ENCODE measurements at regions of chr4 and their contacts with region 1.

Region 1: DNA sequence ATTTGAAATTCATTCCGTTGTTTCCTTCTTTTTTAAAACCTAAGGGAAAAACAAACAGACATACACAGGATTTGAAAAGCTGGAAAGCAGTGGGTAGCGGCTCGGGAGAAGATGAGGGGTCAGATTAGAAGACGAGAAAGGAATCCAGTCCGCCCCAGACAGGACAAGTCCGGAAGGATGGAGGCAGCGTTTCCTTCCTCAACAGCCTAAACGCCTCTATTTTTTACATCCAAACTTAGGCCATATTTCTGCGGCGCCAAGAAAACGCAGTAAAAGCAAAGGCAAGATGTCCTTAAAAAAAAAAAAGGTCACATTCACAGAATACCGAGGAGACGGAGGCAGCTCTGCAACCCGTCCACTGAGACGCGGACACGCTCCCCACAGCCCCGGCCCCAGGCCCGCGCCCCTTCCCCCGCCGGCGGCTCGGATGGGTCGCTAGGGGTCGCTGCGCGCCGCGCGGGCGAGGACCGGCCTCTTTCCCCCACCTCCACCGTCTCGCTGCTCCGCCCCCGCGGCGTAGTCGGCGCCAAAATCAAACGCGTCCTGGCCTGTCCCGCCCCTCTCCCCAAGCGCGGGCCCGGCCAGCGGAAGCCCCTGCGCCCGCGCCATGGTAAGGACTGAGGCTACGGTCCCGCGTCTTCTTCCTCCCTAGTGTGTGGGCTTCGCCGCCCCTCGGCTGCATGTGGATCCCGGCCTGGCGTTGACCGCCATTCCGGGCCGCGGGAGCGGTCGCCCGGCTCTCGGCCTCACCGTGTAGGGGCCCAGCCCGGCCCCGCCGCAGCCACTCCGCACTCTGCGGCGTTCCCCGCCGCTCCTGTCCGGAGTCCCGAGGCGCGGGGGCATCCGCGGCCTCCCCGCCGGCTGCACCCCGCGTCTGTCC is at the start of gene MND1:
- DNase-seq: peak; percentile 77
- H3K4me3 ChIP-seq: peak within 1 kb of the TSS; percentile 54 to 82 (median 76)
- H3K27ac ChIP-seq: peak within 1 kb of the TSS; percentile 78
- H3K4me1 ChIP-seq: peaks cover 25% of the 10 kb centered on the region
- H3K27me3 ChIP-seq: no peaks in the 10 kb centered on the region
- CTCF ChIP-seq: peak; percentile 77 to 87
- POLR2A ChIP-seq: no peak
- total RNA-seq, gene MND1: 7.7 and 8.2 TPM in 2 replicates

Region 2: GRCh38 chr4:153432968-153433753 is 88.8 kb after region 1 on chr4:
- CTCF ChIA-PET with region 1: interaction called, 9 read pairs
- POLR2A ChIA-PET with region 1: no interaction called
- dilution Hi-C with region 1: no loop called
- intact Hi-C with region 1: loop called (anchors 2 kb)
- DNase-seq: peak; percentile 45
- H3K4me3 ChIP-seq: no peak overlapping the region
- H3K27ac ChIP-seq: no peak overlapping the region
- H3K4me1 ChIP-seq: no peaks in the 10 kb centered on the region
- H3K27me3 ChIP-seq: no peaks in the 10 kb centered on the region
- CTCF ChIP-seq: peak; percentile 45 to 46
- POLR2A ChIP-seq: no peak

Region 3: DNA sequence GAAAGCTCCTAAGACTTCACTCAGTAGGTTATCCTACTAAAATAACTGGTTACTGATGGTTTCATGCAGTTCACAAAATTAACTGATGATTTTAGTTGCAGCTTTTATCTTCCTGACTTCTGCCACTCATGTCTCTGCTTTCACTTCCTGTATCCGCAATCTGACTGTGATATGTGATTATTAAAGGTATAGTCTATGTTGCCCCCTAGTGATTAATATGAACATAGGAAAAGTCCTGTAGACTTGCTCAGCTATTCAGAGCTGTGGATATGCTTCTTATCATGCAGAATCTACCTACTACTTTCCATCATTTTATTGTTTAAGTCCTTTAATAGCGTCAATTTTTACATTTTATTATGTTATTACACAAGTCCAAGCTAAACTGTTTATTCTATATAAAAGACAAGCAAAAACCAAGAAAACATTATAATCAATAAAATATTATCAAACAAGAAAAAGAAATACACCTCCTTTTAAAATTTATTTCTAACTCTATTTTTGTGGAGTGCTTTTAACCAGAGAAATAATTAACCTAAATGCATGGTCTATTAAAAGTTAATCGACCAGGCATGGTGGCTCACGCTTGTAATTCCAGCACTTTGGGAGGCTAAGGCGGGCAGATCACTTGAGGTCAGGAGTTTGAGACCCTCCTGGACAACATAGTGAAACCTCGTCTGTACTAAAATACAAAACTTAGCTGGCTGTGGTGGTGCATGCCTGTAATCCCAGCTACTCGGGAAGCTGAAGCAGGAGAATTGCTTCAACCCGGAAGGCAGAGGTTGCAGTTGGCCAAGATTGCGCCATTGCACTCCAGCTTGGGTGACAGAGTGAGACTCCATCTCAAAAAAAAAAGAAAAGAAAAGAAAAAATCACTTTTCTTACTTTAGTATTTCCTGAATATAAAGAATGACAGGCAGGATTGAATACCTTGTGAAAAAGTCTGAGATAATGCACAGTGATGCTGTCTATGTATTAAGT is 299.3 kb after region 1 on chr4:
- CTCF ChIA-PET with region 1: interaction called, 6 read pairs
- POLR2A ChIA-PET with region 1: no interaction called
- dilution Hi-C with region 1: no loop called
- intact Hi-C with region 1: loop called (anchors 1 kb)
- DNase-seq: peak; percentile 56
- H3K4me3 ChIP-seq: no peak overlapping the region
- H3K27ac ChIP-seq: no peak overlapping the region
- H3K4me1 ChIP-seq: peaks cover 4% of the 10 kb centered on the region
- H3K27me3 ChIP-seq: no peaks in the 10 kb centered on the region
- CTCF ChIP-seq: peak; percentile 25 to 26
- POLR2A ChIP-seq: no peak

Measured in endothelial cell of umbilical vein (primary cell).